ENCODE measurements at regions of chr19 and their contacts with region 1.

Region 1: GRCh38 chr19:48333467-48334384 is 8.4 kb downstream of the EMP3 start:
- DNase-seq: peak; percentile 96

Region 2: DNA sequence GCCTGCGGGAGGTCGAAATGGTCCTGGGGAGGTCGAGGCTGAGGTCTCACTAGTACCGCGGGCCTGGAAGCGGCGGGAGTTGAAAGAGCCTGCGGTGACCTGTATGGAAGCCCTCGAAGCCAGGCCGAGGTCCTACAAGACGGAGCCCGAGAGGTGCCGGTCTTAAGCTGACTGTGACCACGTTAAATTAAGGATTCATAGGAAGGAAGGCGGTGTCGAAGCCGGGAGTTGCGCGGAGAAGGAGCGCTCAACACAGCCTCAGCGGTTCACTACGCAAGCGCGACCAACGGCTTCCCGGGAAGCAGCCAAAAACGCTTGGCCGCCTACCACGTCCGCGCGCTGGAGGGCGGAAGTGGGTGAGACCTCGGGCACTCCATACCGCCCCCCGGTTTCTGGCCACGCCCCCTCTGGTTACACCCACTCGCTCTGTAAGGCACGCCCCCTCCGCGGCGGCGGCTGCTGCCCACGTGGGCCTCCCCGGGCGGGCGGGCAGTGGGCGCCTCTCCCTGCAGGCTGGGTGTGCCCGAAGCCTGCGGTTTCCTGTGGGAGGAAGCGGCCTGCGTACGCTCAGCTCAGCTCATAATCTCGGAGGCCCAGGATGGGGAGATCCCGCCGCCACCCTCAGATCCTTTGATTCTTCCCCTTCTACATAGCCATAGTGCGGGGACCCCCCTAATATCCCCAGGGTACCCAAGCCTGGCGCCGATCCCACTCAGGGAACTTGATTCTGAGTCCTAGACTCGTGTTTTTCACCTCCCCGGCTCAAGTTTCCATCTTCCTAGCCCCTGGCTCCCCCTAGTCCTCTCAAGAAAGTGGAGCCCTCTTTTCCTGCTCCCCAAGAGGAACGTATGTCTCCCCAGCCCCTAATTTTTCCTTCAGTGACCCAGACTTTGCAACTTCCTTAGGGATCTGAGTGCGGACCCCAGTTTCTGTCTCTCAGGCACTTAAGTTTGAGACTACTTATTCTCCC is 11.8 kb before region 1 on chr19:
- intact Hi-C with region 1: loop called (anchors 1 kb)
- DNase-seq: peak; percentile 100

Measured in cardiac septum (tissue), 1 donor.